Caco-2 (cell line): ENCODE measurements at regions of chr19 and their contacts with region 1.

Region 1: DNA sequence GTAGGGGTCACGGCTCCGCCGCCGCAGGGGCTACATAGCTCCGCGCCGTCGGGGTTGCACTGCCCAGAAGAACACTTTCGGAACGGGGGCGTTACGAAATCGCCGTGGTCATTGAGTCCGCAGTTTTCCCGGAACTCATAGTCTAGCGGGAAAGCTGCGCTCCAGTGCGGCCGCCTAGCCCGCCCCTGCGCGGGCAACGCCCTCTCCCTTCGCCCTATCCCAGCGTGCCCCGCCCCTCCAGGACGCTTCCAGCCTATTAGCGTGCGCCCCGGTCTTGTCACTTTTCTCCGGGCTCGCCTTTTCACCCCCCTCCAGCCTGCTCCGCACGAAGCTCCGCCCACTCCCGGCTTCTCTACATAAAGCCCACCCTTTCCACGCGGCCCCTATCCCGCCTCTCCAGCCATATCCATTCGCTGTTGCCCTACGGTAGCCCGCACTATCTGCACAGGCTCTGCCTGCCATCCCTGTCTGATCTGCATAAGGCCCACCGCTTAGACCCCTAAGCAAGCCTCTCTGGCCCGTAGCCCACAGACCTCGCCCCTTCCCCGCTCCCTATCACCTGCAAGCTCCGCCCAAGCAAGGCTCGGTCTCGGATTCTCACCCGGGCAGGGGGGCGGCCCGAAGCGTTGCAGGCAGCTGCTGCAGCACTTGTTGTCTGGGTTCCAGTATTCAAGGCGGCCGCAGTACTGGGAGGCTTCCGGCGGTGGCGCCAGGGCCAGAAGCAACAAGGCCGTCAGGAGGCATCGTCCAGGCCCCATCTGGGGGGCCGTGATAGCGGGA is 1.6 kb downstream of the IGFLR1 start:
- DNase-seq: peak; percentile 99
- H3K4me3 ChIP-seq: peak overlapping the region; percentile 58
- H3K4me3 Mint-ChIP-seq: peak overlapping the region; percentile 97
- H3K27ac Mint-ChIP-seq: peak overlapping the region; percentile 87
- H3K4me1 ChIP-seq: peaks cover 8% of the 10 kb centered on the region; the same call in 1 of the 2 replicates
- H3K4me1 Mint-ChIP-seq: peaks cover 11% of the 10 kb centered on the region
- H3K27me3 ChIP-seq: no peaks in the 10 kb centered on the region
- H3K27me3 Mint-ChIP-seq: no peaks in the 10 kb centered on the region
- CTCF ChIP-seq: peak; percentile 22 to 45

Region 2: GRCh38 chr19:35693830-35694599 is 46.6 kb before region 1 on chr19:
- CTCF ChIA-PET with region 1: interaction called, 4 read pairs
- POLR2A ChIA-PET with region 1: no interaction called
- intact Hi-C with region 1: loop called (anchors 2 kb)
- DNase-seq: peak; percentile 90 to 93
- H3K4me3 ChIP-seq: no peak overlapping the region
- H3K4me3 Mint-ChIP-seq: no peak overlapping the region
- H3K27ac Mint-ChIP-seq: no peak overlapping the region
- H3K4me1 ChIP-seq: no peaks in the 10 kb centered on the region
- H3K4me1 Mint-ChIP-seq: peaks cover 6% of the 10 kb centered on the region
- H3K27me3 ChIP-seq: no peaks in the 10 kb centered on the region
- H3K27me3 Mint-ChIP-seq: no peaks in the 10 kb centered on the region
- CTCF ChIP-seq: peak; percentile 98 to 99

Region 3: DNA sequence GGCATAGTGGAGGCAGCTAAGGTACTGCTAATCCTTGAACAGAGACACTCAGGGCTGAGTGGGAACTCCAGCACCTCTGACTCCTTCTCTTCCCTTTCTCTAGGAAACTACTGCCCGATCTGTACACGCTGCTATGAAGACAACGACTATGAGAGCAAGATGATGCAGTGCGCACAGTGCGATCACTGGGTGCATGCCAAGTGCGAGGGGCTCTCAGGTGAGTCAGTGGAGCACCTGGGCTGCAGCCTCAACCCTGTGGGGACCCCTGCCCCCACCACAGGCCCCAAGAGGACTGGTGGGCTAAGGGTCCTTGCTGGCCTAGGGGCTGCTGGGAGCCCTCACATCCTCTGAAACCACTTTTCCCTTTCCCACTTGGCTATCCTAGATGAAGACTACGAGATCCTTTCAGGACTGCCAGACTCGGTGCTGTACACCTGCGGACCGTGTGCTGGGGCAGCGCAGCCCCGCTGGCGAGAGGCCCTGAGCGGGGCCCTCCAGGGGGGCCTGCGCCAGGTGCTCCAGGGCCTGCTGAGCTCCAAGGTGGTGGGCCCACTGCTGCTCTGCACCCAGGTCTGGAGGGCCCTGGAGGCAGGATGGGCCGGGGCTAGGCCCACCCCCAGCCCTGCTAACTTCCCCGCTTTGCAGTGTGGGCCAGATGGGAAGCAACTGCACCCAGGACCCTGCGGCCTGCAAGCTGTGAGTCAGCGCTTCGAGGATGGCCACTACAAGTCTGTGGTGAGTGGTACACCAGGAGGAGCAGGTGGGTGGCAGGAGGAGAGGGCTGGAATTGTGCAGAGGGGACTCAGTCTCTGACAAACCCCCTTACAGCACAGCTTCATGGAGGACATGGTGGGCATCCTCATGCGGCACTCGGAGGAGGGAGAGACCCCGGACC is 13.3 kb before region 1 on chr19:
- CTCF ChIA-PET with region 1: interaction called, 10 read pairs
- POLR2A ChIA-PET with region 1: interaction called, 7 read pairs
- intact Hi-C with region 1: no loop called
- DNase-seq: no peak
- H3K4me3 ChIP-seq: no peak overlapping the region
- H3K4me3 Mint-ChIP-seq: no peak overlapping the region
- H3K27ac Mint-ChIP-seq: no peak overlapping the region
- H3K4me1 ChIP-seq: no peaks in the 10 kb centered on the region
- H3K4me1 Mint-ChIP-seq: no peaks in the 10 kb centered on the region
- H3K27me3 ChIP-seq: no peaks in the 10 kb centered on the region
- H3K27me3 Mint-ChIP-seq: no peaks in the 10 kb centered on the region
- CTCF ChIP-seq: no peak

Region 4: GRCh38 chr19:35767288-35768081 is 26.9 kb after region 1 on chr19:
- CTCF ChIA-PET with region 1: no interaction called
- POLR2A ChIA-PET with region 1: no interaction called
- intact Hi-C with region 1: no loop called
- DNase-seq: peak in 1 of 2 experiments; percentile 37
- H3K4me3 ChIP-seq: no peak overlapping the region
- H3K4me3 Mint-ChIP-seq: no peak overlapping the region
- H3K27ac Mint-ChIP-seq: no peak overlapping the region
- H3K4me1 ChIP-seq: no peaks in the 10 kb centered on the region
- H3K4me1 Mint-ChIP-seq: no peaks in the 10 kb centered on the region
- H3K27me3 ChIP-seq: no peaks in the 10 kb centered on the region
- H3K27me3 Mint-ChIP-seq: peaks cover 2% of the 10 kb centered on the region
- CTCF ChIP-seq: no peak

Region 5: GRCh38 chr19:35822579-35822978 is 82.0 kb after region 1 on chr19:
- CTCF ChIA-PET with region 1: interaction called, 13 read pairs
- POLR2A ChIA-PET with region 1: interaction called, 19 read pairs
- intact Hi-C with region 1: loop called (anchors 2 kb)
- DNase-seq: no peak
- H3K4me3 ChIP-seq: no peak overlapping the region
- H3K4me3 Mint-ChIP-seq: no peak overlapping the region
- H3K27ac Mint-ChIP-seq: no peak overlapping the region
- H3K4me1 ChIP-seq: peaks cover 4% of the 10 kb centered on the region; the same call in 1 of the 2 replicates
- H3K4me1 Mint-ChIP-seq: no peaks in the 10 kb centered on the region
- H3K27me3 ChIP-seq: no peaks in the 10 kb centered on the region
- H3K27me3 Mint-ChIP-seq: peaks cover 11% of the 10 kb centered on the region
- CTCF ChIP-seq: no peak